Activated CD4-positive, alpha-beta memory T cell treated with anti-CD3 and anti-CD28 coated beads, Interleukin-2, amount 10 ng/mL, durations not matched to agents 7 days and 5 days (primary cell): ENCODE measurements at regions of chr15 and their contacts with region 1.

Region 1: DNA sequence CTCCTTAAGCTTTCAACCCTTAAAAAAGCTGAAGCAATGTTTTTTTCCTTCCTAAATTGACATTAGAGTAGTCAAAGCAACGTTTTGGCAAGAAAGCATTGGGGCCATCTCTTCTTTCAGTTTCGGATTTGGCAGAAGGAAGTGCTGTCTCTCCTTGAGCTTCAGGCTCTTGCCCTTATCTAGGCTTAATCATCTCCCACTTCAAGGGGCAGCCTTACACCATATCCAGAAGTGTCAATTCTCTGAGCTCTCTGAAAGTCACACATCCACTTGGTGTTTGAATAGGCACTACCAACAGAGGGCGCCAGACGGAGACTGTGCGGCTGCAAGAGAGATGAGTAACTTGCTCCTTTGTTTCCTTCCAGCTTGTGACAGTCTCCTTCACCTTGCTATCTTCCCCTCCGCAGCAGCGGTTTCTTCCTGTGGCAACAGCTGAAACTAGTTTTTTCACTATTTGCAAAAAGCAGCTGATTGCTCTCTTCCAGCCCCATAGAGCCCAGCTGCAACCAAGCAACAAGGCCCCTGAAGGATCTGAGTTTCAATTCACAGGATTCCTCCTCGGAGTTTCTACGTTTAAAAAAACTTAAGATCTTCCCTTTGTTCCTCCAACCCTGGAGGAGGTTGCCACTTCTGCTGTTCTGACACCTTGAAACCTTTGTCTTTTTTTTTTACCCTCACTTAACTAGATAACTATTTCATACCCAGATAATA is 147.0 kb upstream of the SLCO3A1 start:
- DNase-seq: peak; percentile 89
- H3K4me3 Mint-ChIP-seq: no peak overlapping the region
- H3K27ac Mint-ChIP-seq: peak overlapping the region; percentile 58
- H3K4me1 Mint-ChIP-seq: peaks cover 17% of the 10 kb centered on the region
- H3K27me3 Mint-ChIP-seq: peaks cover 9% of the 10 kb centered on the region

Region 2: GRCh38 chr15:91302588-91303439 is 403.7 kb before region 1 on chr15:
- CTCF ChIA-PET with region 1: interaction called, 23 read pairs
- POLR2A ChIA-PET with region 1: no interaction called
- DNase-seq: no peak
- H3K4me3 Mint-ChIP-seq: no peak overlapping the region
- H3K27ac Mint-ChIP-seq: no peak overlapping the region
- H3K4me1 Mint-ChIP-seq: peaks cover 10% of the 10 kb centered on the region
- H3K27me3 Mint-ChIP-seq: peaks cover 52% of the 10 kb centered on the region

Region 3: GRCh38 chr15:91694831-91695210 is 11.7 kb before region 1 on chr15:
- CTCF ChIA-PET with region 1: interaction called, 19 read pairs
- POLR2A ChIA-PET with region 1: no interaction called
- DNase-seq: no peak
- H3K4me3 Mint-ChIP-seq: no peak overlapping the region
- H3K27ac Mint-ChIP-seq: no peak overlapping the region
- H3K4me1 Mint-ChIP-seq: no peaks in the 10 kb centered on the region
- H3K27me3 Mint-ChIP-seq: no peaks in the 10 kb centered on the region

Region 4: DNA sequence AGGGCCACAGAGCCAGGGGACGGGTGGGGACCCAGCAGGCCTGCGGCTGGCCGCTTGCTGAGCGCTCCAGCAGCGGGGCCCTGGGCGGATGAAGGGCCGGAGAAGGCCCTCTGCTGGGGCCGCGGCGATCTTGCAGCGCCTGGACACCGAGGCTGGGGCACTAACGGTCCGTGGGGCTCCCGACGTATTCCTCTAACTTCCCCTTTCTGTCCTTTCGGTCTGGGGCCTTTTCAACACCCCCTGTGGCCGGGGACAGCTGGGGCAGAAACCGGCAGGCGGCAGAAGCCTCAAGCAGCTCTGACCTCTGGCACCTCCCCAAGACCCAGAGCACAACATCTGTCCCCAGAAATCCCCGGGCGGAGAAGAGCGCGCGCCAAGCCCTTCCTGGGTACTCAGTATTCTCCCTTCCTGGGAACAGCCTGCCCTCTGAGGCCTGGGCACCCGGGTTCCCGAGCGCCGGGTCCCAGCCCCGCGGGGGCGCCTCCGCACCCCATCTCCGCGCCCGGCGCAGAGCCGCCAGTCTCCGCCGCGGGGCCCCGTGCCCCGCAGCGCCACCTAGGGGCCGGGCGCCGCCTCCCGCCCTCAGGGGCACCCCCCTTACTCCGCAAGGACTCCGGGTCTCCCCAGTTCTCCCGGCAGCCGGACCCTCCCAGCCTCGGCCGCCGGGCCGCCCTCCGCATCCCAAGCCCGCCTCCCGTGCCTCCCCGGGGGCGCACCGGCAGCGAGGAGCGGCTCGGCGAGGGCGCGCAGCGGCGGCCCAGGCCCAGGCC is 146.4 kb after region 1 on chr15:
- CTCF ChIA-PET with region 1: interaction called, 30 read pairs
- POLR2A ChIA-PET with region 1: interaction called, 8 read pairs
- DNase-seq: peak; percentile 77
- H3K4me3 Mint-ChIP-seq: peak overlapping the region; percentile 83
- H3K27ac Mint-ChIP-seq: peak overlapping the region; percentile 87
- H3K4me1 Mint-ChIP-seq: peaks cover 59% of the 10 kb centered on the region
- H3K27me3 Mint-ChIP-seq: no peaks in the 10 kb centered on the region

Region 5: GRCh38 chr15:91885714-91886270 is 179.3 kb after region 1 on chr15:
- CTCF ChIA-PET with region 1: no interaction called
- POLR2A ChIA-PET with region 1: no interaction called
- DNase-seq: no peak
- H3K4me3 Mint-ChIP-seq: no peak overlapping the region
- H3K27ac Mint-ChIP-seq: no peak overlapping the region
- H3K4me1 Mint-ChIP-seq: peaks cover 12% of the 10 kb centered on the region
- H3K27me3 Mint-ChIP-seq: no peaks in the 10 kb centered on the region

Region 6: DNA sequence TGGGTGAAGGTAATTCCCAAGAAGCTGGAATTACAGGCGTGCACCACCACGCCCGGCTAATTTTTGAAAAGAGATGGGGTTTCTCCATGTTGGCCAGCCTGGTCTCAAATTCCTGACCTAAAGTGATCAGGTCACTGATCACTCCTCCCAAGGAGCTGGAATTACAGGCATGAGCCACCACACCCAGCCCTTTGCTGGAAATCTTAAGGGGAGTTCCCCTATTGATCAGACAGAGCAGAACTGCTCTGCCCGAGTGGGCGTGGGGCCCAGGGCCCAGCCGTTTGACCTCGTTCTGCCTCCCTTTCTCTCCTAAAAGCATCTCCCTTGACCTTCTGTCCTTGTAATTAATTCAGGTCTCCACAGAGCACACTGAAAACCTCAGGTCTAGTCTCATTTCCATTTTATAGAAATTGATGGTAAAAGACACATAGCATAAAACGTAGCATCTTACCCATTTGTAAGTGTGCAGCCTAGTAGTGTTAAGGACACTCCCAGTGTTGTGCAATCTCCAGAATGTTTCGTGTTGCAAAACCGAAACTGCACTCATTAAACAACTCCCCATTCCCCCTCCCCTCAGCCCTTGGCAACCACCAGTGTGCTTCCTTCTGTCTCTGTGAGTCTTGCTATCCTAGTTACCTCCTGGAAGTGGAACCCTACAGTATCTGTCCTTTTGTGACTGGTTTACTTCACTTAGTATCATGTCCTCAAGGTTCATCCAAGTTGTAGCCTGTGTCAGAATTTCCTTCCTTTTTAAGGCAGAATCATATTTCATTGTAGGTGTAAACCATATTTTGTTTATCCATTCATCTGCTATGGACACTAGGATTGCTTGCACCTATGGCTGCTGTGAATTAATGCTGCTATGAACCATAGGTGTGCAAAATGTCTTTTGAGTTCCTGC is 236.4 kb after region 1 on chr15:
- CTCF ChIA-PET with region 1: interaction called, 11 read pairs
- POLR2A ChIA-PET with region 1: no interaction called
- DNase-seq: peak; percentile 63
- H3K4me3 Mint-ChIP-seq: peak overlapping the region; percentile 33
- H3K27ac Mint-ChIP-seq: no peak overlapping the region
- H3K4me1 Mint-ChIP-seq: peaks cover 42% of the 10 kb centered on the region
- H3K27me3 Mint-ChIP-seq: no peaks in the 10 kb centered on the region